Endothelial cell of umbilical vein (primary cell): ENCODE measurements at regions of chr12 and their contacts with region 1.

Region 1: GRCh38 chr12:113912760-113913329 is 53.3 kb downstream of the RBM19 start:
- DNase-seq: peak; percentile 79
- H3K4me3 ChIP-seq: no peak overlapping the region
- H3K27ac ChIP-seq: no peak overlapping the region
- H3K4me1 ChIP-seq: no peaks in the 10 kb centered on the region
- H3K27me3 ChIP-seq: no peaks in the 10 kb centered on the region
- CTCF ChIP-seq: peak; percentile 89 to 91
- POLR2A ChIP-seq: no peak

Region 2: DNA sequence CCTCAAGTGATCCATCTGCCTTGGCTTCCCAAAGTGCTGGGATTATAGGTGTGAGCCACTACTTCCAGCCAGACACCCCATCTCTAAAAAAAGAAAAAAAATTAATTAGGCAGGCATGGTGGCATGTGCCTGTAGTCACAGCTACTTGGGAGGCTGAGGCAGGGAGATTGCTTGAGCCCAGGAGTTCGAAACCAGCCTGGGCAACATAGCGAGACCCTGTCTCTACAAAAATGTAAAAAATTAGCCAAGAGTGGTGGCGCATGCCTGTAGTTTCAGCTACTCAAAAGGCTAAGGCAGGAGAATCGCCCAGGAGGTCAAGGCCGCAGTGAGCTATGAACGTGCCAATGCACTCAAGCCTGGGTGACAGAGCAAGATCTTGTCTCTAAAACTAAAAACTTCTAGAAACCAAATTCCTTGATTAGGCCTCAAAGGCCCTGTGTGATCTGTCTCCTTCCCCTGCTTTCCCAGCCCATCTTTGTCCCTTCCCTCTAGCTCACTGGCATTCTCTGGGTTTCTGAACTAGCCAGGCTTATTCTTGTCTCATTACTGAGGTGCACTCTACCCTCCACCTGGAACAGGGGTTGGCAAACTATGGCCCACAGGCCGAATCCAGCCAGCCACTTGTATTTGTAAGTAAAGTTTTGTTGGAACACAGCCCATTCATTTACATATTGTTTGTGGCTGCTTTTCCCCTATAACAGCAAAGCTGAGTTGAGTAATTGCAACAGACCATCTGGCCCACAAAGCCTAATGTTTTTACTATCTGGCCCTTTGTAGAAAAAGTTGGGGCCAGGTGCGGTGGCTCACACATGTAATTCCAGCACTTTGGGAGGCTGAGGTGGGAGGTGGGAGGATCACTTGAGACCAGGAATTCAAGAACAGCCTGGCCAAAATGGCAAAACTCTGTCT is 708.7 kb before region 1 on chr12:
- CTCF ChIA-PET with region 1: no interaction called
- POLR2A ChIA-PET with region 1: no interaction called
- dilution Hi-C with region 1: no loop called
- intact Hi-C with region 1: no loop called
- DNase-seq: no peak
- H3K4me3 ChIP-seq: no peak overlapping the region
- H3K27ac ChIP-seq: no peak overlapping the region
- H3K4me1 ChIP-seq: no peaks in the 10 kb centered on the region
- H3K27me3 ChIP-seq: no peaks in the 10 kb centered on the region
- CTCF ChIP-seq: no peak
- POLR2A ChIP-seq: no peak

Region 3: GRCh38 chr12:113310489-113310888 is 602.4 kb before region 1 on chr12:
- CTCF ChIA-PET with region 1: interaction called, 3 read pairs
- POLR2A ChIA-PET with region 1: no interaction called
- dilution Hi-C with region 1: no loop called
- intact Hi-C with region 1: loop called (anchors 1 kb)
- DNase-seq: no peak
- H3K4me3 ChIP-seq: no peak overlapping the region
- H3K27ac ChIP-seq: no peak overlapping the region
- H3K4me1 ChIP-seq: no peaks in the 10 kb centered on the region
- H3K27me3 ChIP-seq: no peaks in the 10 kb centered on the region
- CTCF ChIP-seq: no peak
- POLR2A ChIP-seq: no peak

Region 4: DNA sequence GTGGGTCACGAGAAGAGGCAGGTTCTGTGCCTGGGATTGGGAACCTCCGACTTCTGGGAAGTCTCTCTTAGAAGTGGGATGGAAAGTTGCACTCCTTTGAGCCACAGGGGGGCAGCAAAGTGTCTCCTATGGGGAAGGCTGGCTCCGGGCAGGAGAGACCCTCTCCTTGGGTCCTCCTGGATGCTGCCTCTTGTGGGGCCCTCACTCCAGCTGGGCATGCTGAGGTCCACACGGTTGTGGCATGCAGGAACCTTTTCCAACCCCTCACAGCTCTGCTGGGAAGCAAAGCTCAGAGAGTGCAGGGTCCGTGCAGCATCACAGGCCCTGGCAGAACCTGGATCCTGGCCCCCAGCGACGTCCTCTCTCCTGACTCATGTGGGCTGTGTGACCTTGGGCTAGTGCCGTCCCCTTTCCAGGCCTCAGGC is 473.2 kb before region 1 on chr12:
- CTCF ChIA-PET with region 1: interaction called, 10 read pairs
- POLR2A ChIA-PET with region 1: no interaction called
- dilution Hi-C with region 1: no loop called
- intact Hi-C with region 1: no loop called
- DNase-seq: peak; percentile 44
- H3K4me3 ChIP-seq: no peak overlapping the region
- H3K27ac ChIP-seq: no peak overlapping the region
- H3K4me1 ChIP-seq: no peaks in the 10 kb centered on the region
- H3K27me3 ChIP-seq: peaks cover 0 to 2% of the 10 kb centered on the region in 2 experiments
- CTCF ChIP-seq: peak; percentile 68 to 80
- POLR2A ChIP-seq: no peak

Region 5: GRCh38 chr12:113462117-113462774 is 450.6 kb before region 1 on chr12:
- CTCF ChIA-PET with region 1: interaction called, 112 read pairs
- POLR2A ChIA-PET with region 1: interaction called, 4 read pairs
- dilution Hi-C with region 1: no loop called
- intact Hi-C with region 1: loop called (anchors 1 kb)
- DNase-seq: peak; percentile 65
- H3K4me3 ChIP-seq: no peak overlapping the region
- H3K27ac ChIP-seq: no peak overlapping the region
- H3K4me1 ChIP-seq: no peaks in the 10 kb centered on the region
- H3K27me3 ChIP-seq: peaks cover 32 to 54% of the 10 kb centered on the region in 2 experiments
- CTCF ChIP-seq: peak; percentile 84 to 98
- POLR2A ChIP-seq: no peak

Region 6: GRCh38 chr12:113647048-113647447 is 265.8 kb before region 1 on chr12:
- CTCF ChIA-PET with region 1: no interaction called
- POLR2A ChIA-PET with region 1: no interaction called
- dilution Hi-C with region 1: no loop called
- intact Hi-C with region 1: loop called (anchors 2 kb)
- DNase-seq: no peak
- H3K4me3 ChIP-seq: no peak overlapping the region
- H3K27ac ChIP-seq: no peak overlapping the region
- H3K4me1 ChIP-seq: no peaks in the 10 kb centered on the region
- H3K27me3 ChIP-seq: no peaks in the 10 kb centered on the region
- CTCF ChIP-seq: no peak
- POLR2A ChIP-seq: no peak

Region 7: GRCh38 chr12:113786107-113786506 is 126.7 kb before region 1 on chr12:
- CTCF ChIA-PET with region 1: interaction called, 3 read pairs
- POLR2A ChIA-PET with region 1: no interaction called
- dilution Hi-C with region 1: no loop called
- intact Hi-C with region 1: loop called (anchors 1 kb)
- DNase-seq: no peak
- H3K4me3 ChIP-seq: no peak overlapping the region
- H3K27ac ChIP-seq: no peak overlapping the region
- H3K4me1 ChIP-seq: no peaks in the 10 kb centered on the region
- H3K27me3 ChIP-seq: peaks cover 3% of the 10 kb centered on the region in 2 experiments
- CTCF ChIP-seq: no peak
- POLR2A ChIP-seq: no peak

Region 8: DNA sequence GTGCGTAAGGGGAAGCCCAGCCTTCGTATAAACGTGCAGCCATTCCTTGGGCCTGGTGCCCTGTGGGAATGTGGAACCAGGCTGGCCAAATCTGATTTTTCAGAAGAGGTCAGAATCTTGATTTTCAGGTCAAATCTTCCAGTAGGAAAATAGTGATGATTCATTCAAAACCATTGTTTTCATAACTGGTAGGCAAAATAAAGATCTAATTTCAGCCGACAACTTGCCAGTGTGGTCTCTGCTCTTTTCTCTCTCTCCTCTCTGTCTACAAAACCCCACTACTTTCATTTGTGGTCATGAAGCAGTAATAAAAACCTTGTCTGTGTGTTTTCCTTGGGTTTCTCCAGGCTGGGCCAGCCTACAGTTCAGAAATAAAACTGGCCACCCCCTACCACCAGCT is 81.8 kb before region 1 on chr12:
- CTCF ChIA-PET with region 1: interaction called, 3 read pairs
- POLR2A ChIA-PET with region 1: no interaction called
- dilution Hi-C with region 1: no loop called
- intact Hi-C with region 1: loop called (anchors 5 kb)
- DNase-seq: peak; percentile 76
- H3K4me3 ChIP-seq: no peak overlapping the region
- H3K27ac ChIP-seq: peak overlapping the region; percentile 42
- H3K4me1 ChIP-seq: peaks cover 13% of the 10 kb centered on the region
- H3K27me3 ChIP-seq: no peaks in the 10 kb centered on the region
- CTCF ChIP-seq: no peak
- POLR2A ChIP-seq: no peak